ENCODE measurements at regions of chr12 and their contacts with region 1.

Region 1: GRCh38 chr12:124588751-124589267 is 21.4 kb upstream of the NCOR2 start:
- DNase-seq: peak; percentile 83
- H3K27ac ChIP-seq: peak overlapping the region; percentile 80
- CTCF ChIP-seq: no peak

Region 2: GRCh38 chr12:124428130-124428791 is 160.5 kb before region 1 on chr12:
- CTCF ChIA-PET with region 1: no interaction called
- POLR2A ChIA-PET with region 1: no interaction called
- DNase-seq: no peak
- H3K27ac ChIP-seq: peak overlapping the region; percentile 99
- CTCF ChIP-seq: no peak

Region 3: GRCh38 chr12:124466216-124467128 is 122.3 kb before region 1 on chr12:
- CTCF ChIA-PET with region 1: no interaction called
- POLR2A ChIA-PET with region 1: no interaction called
- DNase-seq: no peak
- H3K27ac ChIP-seq: peak overlapping the region; percentile 40
- CTCF ChIP-seq: no peak

Region 4: GRCh38 chr12:124568431-124569374 is 20.1 kb before region 1 on chr12:
- CTCF ChIA-PET with region 1: no interaction called
- POLR2A ChIA-PET with region 1: interaction called, 14 read pairs
- DNase-seq: no peak
- H3K27ac ChIP-seq: peak overlapping the region; percentile 94
- CTCF ChIP-seq: 0 out of 2 replicates have a peak, but pooled peaks have one; percentile 6

Measured in RWPE1 (cell line).